ENCODE measurements at regions of chrX and their contacts with region 1.

Region 1: GRCh38 chrX:72094894-72095293 is 36.8 kb downstream of the RTL5 start:
- DNase-seq: peak; percentile 81 to 92 (median 86)
- H3K4me3 ChIP-seq: no peak overlapping the region
- H3K4me3 Mint-ChIP-seq: peak overlapping the region in 6 of 8 donors; percentile 5 to 61 (median 42)
- H3K27ac ChIP-seq: peak overlapping the region; percentile 69
- H3K27ac Mint-ChIP-seq: peak overlapping the region; percentile 69 to 97 (median 93)
- H3K4me1 ChIP-seq: peaks cover 37% of the 10 kb centered on the region
- H3K4me1 Mint-ChIP-seq: peaks cover 15 to 39% (median 28%) of the 10 kb centered on the region in 4 donors
- H3K27me3 ChIP-seq: no peaks in the 10 kb centered on the region
- H3K27me3 Mint-ChIP-seq: no peaks in the 10 kb centered on the region

Region 2: GRCh38 chrX:72121383-72121782 is 26.5 kb after region 1 on chrX:
- CTCF ChIA-PET with region 1: interaction called, 11 read pairs
- POLR2A ChIA-PET with region 1: interaction called, 116 read pairs
- intact Hi-C with region 1: loop called (anchors 2 kb)
- DNase-seq: peak; percentile 44 to 63 (median 46)
- H3K4me3 ChIP-seq: peak overlapping the region in 1 of 2 donors; percentile 9
- H3K4me3 Mint-ChIP-seq: peak overlapping the region; percentile 28 to 74 (median 58)
- H3K27ac ChIP-seq: peak overlapping the region; percentile 32
- H3K27ac Mint-ChIP-seq: peak overlapping the region; percentile 79 to 94 (median 88)
- H3K4me1 ChIP-seq: peaks cover 74% of the 10 kb centered on the region
- H3K4me1 Mint-ChIP-seq: peaks cover 40 to 81% (median 59%) of the 10 kb centered on the region in 4 donors
- H3K27me3 ChIP-seq: no peaks in the 10 kb centered on the region
- H3K27me3 Mint-ChIP-seq: no peaks in the 10 kb centered on the region

Region 3: DNA sequence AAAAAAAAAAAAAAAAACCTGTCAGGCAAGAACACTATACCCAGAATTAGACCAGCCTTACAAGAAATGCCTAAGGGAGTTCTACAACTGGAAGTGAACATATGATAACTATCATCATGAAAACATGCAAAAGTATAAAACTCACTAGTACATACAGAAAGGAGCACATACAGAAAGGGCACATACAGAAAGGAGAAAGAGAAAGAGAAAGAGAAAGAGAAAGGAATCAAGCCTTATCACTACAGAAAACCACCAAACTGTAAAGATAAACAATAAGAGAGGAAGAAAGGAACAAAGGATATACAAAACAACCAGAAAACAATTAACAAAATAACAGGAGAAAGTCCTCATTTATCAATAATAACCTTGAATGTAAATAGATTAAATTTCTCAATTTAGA is 568.8 kb after region 1 on chrX:
- CTCF ChIA-PET with region 1: no interaction called
- POLR2A ChIA-PET with region 1: no interaction called
- intact Hi-C with region 1: no loop called
- DNase-seq: no peak
- H3K4me3 ChIP-seq: no peak overlapping the region
- H3K4me3 Mint-ChIP-seq: no peak overlapping the region
- H3K27ac ChIP-seq: no peak overlapping the region
- H3K27ac Mint-ChIP-seq: no peak overlapping the region
- H3K4me1 ChIP-seq: no peaks in the 10 kb centered on the region
- H3K4me1 Mint-ChIP-seq: peaks cover 0 to 3% (median 0%) of the 10 kb centered on the region in 4 donors
- H3K27me3 ChIP-seq: no peaks in the 10 kb centered on the region
- H3K27me3 Mint-ChIP-seq: peaks cover 3% of the 10 kb centered on the region in 2 donors